ENCODE measurements at regions of chr6 and their contacts with region 1.

Region 1: DNA sequence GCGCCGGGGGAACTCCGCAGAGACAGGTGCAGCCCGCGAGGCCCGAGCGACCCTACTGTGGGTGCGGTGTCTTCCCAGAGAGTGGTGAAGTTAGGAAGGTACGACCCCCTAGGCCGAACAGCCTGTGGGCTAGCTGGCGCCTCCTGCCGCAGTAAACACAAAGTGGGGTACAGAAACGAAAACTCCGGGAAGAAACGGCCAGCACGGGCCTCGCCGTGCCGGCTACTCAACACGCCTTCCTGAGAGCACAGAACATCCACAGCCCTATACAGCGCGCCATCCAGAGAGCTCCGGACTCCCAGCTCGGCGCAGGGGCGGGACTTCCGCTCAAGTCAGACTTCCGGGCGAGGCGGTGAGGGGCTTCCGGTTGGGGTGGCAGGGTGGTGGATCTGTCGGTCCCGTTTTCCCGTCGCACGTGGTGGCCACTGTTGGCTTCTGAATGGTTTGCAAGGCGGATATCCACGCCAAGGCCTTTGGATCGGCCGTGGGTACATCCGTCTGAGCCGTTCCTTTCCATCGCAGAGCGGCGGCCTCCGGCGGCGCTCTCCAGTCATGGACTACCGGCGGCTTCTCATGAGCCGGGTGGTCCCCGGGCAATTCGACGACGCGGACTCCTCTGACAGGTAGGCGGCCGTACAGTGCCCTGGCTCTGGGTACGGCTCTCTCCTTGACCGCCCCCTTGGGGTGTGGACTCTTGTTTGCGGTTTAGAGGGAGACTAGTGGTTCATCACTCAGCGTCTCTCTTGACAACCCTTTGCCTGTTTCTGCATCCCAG is at the starts of genes CAGE1 and RIOK1:
- DNase-seq: peak; percentile 95
- ATAC-seq: peak; percentile 99 to 100 (median 100)
- H3K4me3 ChIP-seq: peak within 1 kb of the TSS; percentile 68 to 90 (median 80)
- H3K27ac ChIP-seq: peak within 1 kb of the TSS; percentile 49 to 95 (median 90)
- H3K4me1 ChIP-seq: peaks cover 3 to 28% (median 22%) of the 10 kb centered on the region in 9 donors
- H3K27me3 ChIP-seq: no peaks in the 10 kb centered on the region
- CTCF ChIP-seq: peak in 5 of 9 donors; percentile 15 to 39 (median 31)
- total RNA-seq, gene CAGE1: 0.08 to 0.32 TPM in 2 of 10 donors, not detected in the others
- total RNA-seq, gene RIOK1: 7.0 to 13.4 (median 11.0) TPM

Region 2: DNA sequence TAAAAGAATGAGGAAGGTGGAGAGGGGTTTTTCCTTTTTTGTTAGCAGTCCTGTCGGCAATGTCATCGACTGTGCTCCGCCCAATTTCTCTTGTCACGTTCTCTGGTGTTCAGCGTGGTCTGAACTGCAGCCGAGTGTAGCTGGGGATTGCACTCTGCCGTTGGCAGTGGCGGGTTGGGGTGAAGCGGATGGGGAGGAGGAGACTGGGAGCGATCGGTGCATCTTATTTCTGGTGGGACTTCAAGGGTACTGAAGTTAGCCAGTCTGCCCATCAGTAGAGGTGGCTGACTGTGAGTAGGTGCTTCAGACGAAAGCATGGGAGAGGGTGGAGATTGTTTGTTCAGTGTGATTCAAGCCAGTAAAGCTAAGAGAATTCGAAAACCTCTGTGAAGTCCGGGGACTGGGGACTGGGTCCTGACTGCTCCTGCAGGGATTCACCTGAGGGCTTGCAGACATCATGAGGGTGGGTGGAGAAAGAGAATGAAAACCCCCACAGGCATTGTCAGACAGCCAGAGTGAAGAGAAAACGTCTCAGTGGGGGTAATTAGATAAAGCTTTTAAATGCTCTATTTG is 276.8 kb before region 1 on chr6:
- intact Hi-C with region 1: loop called in 1 of 10 experiments (anchors 5 kb)
- DNase-seq: peak in 1 of 2 donors; percentile 30
- ATAC-seq: peak in 4 of 8 donors; percentile 18 to 28 (median 22)
- H3K4me3 ChIP-seq: peak overlapping the region in 3 of 10 donors; percentile 11 to 15 (median 14)
- H3K27ac ChIP-seq: peak overlapping the region in 9 of 10 donors; percentile 20 to 96 (median 37)
- H3K4me1 ChIP-seq: peaks cover 13 to 82% (median 67%) of the 10 kb centered on the region in 9 donors
- H3K27me3 ChIP-seq: no peaks in the 10 kb centered on the region
- CTCF ChIP-seq: no peak

Region 3: GRCh38 chr6:7270320-7271204 is 119.1 kb before region 1 on chr6:
- intact Hi-C with region 1: loop called in 1 of 10 experiments (anchors 10 kb)
- DNase-seq: no peak
- ATAC-seq: no peak
- H3K4me3 ChIP-seq: no peak overlapping the region
- H3K27ac ChIP-seq: no peak overlapping the region
- H3K4me1 ChIP-seq: peaks cover 0 to 23% (median 0%) of the 10 kb centered on the region in 9 donors
- H3K27me3 ChIP-seq: no peaks in the 10 kb centered on the region
- CTCF ChIP-seq: no peak

Region 4: GRCh38 chr6:7312616-7313504 is 76.8 kb before region 1 on chr6 and contains the start of gene SSR1:
- intact Hi-C with region 1: loop called in 7 of 10 experiments (anchors 2 to 10 kb)
- DNase-seq: peak; percentile 97 to 98
- ATAC-seq: peak; percentile 100
- H3K4me3 ChIP-seq: peak within 1 kb of the TSS; percentile 75 to 100 (median 97)
- H3K27ac ChIP-seq: peak within 1 kb of the TSS; percentile 80 to 99 (median 96)
- H3K4me1 ChIP-seq: peaks cover 6 to 55% (median 30%) of the 10 kb centered on the region in 9 donors
- H3K27me3 ChIP-seq: no peaks in the 10 kb centered on the region
- CTCF ChIP-seq: no peak
- total RNA-seq, gene SSR1: 50.9 to 80.5 (median 62.5) TPM

Region 5: GRCh38 chr6:7324520-7324919 is 65.1 kb before region 1 on chr6:
- intact Hi-C with region 1: loop called in 2 of 10 experiments (anchors 10 kb)
- DNase-seq: peak in 1 of 2 donors; percentile 22
- ATAC-seq: peak in 7 of 8 donors; percentile 55 to 88 (median 69)
- H3K4me3 ChIP-seq: no peak overlapping the region
- H3K27ac ChIP-seq: peak overlapping the region in 2 of 10 donors; percentile 21 to 77
- H3K4me1 ChIP-seq: peaks cover 0 to 27% (median 0%) of the 10 kb centered on the region in 9 donors
- H3K27me3 ChIP-seq: peaks cover 0 to 13% (median 0%) of the 10 kb centered on the region in 7 donors
- CTCF ChIP-seq: no peak

Region 6: GRCh38 chr6:7414811-7415210 is 25.2 kb after region 1 on chr6:
- intact Hi-C with region 1: loop called in 1 of 10 experiments (anchors 1 kb)
- DNase-seq: no peak
- ATAC-seq: no peak
- H3K4me3 ChIP-seq: no peak overlapping the region
- H3K27ac ChIP-seq: no peak overlapping the region
- H3K4me1 ChIP-seq: no peaks in the 10 kb centered on the region
- H3K27me3 ChIP-seq: no peaks in the 10 kb centered on the region
- CTCF ChIP-seq: no peak

Region 7: GRCh38 chr6:7633361-7633760 is 243.7 kb after region 1 on chr6:
- intact Hi-C with region 1: no loop called
- DNase-seq: no peak
- ATAC-seq: no peak
- H3K4me3 ChIP-seq: no peak overlapping the region
- H3K27ac ChIP-seq: no peak overlapping the region
- H3K4me1 ChIP-seq: no peaks in the 10 kb centered on the region
- H3K27me3 ChIP-seq: peaks cover 0 to 14% (median 0%) of the 10 kb centered on the region in 7 donors
- CTCF ChIP-seq: no peak

Measured in heart right ventricle (tissue), 16 donors.